Calu3 (cell line): ENCODE measurements at regions of chr22 and their contacts with region 1.

Region 1: DNA sequence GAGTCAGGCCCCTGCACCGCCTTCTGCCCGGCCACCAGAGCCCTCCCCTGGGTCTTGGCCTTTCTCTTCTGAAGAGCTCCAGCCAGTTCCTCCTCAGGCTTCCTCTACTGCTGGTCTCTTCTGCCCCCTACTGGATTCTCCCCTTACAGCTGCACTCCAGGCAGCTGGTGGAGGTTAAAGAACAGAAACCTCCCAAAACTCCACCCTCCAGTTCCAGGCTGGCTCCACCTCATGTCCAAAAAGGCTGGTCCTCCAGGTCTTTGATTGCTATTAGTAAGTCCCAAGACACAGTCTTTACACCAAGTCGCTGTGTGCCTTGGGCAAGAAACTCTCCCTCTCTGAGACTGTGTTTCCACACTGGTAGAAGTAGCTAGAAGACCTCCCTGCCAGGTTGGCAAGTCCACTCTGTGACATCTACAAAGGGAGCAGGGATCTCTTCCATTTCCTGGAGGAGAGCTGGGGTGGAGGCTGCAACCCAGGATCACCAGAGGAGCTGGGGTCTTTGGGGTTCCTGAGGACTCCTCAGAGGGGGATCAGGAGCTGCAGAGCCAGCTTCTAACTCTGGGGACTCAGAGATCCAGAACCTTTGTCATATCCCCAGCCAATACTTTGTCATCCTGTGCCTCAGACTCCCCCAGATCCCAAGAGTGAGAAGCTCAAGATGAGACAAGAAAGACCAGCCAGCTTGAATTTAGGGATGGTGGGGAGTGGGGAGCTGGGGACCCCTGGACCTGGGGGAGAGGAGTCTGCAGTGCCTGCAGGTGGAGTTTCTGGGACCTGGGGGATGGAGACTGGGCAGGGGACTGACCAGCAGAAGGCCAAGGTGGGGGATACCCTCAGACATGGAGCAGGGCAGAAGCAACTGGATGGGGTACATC is 3.4 kb upstream of the IGLL5 start:
- DNase-seq: peak; percentile 78
- H3K4me3 Mint-ChIP-seq: no peak overlapping the region
- H3K27ac Mint-ChIP-seq: no peak overlapping the region
- H3K4me1 Mint-ChIP-seq: no peaks in the 10 kb centered on the region
- H3K27me3 Mint-ChIP-seq: peaks cover 89% of the 10 kb centered on the region
- CTCF ChIP-seq: peak; percentile 67

Region 2: DNA sequence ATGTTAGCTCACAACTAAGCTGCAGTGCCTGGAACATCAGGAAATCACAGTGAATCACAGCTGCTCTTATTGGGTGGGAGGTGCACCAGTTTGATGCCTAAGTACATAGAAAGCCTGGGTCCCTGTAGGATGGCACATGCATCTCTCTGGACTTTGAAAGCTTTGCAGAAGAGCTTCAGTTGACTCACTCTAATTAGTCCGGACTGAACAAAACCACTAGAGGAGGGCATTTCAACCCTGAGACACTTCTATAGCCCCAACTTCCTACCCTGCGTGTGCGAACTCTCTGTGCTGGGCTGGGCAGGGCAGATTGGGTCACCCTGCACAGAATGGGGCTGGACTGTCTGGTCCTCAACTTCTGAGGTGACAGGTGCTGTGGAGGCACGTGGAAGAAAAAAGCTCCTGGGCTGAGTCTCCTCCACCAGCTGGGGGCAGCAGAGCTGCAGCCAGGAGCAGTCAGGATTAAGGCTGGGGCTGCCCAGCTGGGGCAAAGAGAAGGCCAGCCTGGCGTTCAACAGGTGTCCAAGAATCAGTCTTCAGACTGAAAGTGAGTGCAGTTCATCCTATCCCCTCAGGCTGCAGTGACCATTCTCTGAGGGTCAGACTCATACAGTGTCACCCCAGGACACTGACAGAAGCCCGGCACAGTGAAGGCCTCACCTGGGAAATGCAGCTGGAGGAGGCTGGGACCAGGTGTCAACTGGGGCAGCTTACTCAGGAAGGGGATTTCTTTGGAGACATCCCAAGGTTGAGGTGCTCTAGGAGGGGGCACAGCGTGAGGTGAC is 217.8 kb before region 1 on chr22:
- CTCF ChIA-PET with region 1: interaction called, 25 read pairs
- intact Hi-C with region 1: no loop called
- DNase-seq: peak; percentile 72
- H3K4me3 Mint-ChIP-seq: no peak overlapping the region
- H3K27ac Mint-ChIP-seq: no peak overlapping the region
- H3K4me1 Mint-ChIP-seq: no peaks in the 10 kb centered on the region
- H3K27me3 Mint-ChIP-seq: peaks cover 77% of the 10 kb centered on the region
- CTCF ChIP-seq: peak; percentile 72

Region 3: GRCh38 chr22:22753526-22754267 is 130.6 kb before region 1 on chr22:
- CTCF ChIA-PET with region 1: interaction called, 41 read pairs
- intact Hi-C with region 1: no loop called
- DNase-seq: peak; percentile 91
- H3K4me3 Mint-ChIP-seq: no peak overlapping the region
- H3K27ac Mint-ChIP-seq: peak overlapping the region; percentile 53
- H3K4me1 Mint-ChIP-seq: peaks cover 19% of the 10 kb centered on the region
- H3K27me3 Mint-ChIP-seq: peaks cover 13% of the 10 kb centered on the region
- CTCF ChIP-seq: peak; percentile 76

Region 4: DNA sequence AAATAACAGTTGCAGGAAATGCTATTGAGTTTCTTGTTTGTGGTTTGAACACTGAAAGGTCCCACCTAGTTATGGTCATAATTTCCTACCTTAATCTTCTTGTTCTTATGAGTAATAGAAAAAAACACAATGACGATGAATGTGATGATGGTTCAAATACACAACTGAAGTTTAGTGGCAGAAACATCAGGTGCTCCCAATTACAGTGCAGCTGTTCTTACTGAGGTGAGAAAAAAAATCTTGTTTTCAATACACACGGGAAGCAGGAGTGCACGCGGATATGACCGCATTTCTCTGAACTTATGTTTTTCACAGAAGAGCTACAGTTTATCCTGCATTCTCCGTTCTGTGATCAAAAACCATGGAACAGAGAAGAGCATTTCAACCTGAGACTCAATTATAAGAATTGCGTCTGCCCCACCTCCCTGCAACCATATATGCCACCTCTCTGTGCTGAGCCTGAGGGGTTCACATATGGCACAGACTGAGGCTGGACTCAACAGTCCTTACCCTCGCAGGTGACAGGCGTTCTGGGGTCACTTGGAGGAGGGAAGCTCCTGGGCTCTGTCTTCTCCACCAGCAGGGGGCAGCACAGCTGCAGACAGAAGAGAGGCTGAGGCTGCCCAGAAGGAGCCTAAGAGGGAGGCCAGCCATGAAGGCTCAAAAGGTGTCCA is 96.3 kb before region 1 on chr22:
- CTCF ChIA-PET with region 1: interaction called, 29 read pairs
- intact Hi-C with region 1: no loop called
- DNase-seq: peak; percentile 78
- H3K4me3 Mint-ChIP-seq: no peak overlapping the region
- H3K27ac Mint-ChIP-seq: no peak overlapping the region
- H3K4me1 Mint-ChIP-seq: no peaks in the 10 kb centered on the region
- H3K27me3 Mint-ChIP-seq: peaks cover 66% of the 10 kb centered on the region
- CTCF ChIP-seq: peak; percentile 83

Region 5: GRCh38 chr22:22848364-22848866 is 35.8 kb before region 1 on chr22:
- CTCF ChIA-PET with region 1: interaction called, 19 read pairs
- intact Hi-C with region 1: no loop called
- DNase-seq: peak; percentile 81
- H3K4me3 Mint-ChIP-seq: no peak overlapping the region
- H3K27ac Mint-ChIP-seq: no peak overlapping the region
- H3K4me1 Mint-ChIP-seq: no peaks in the 10 kb centered on the region
- H3K27me3 Mint-ChIP-seq: peaks cover 93% of the 10 kb centered on the region
- CTCF ChIP-seq: peak; percentile 93